Heart right ventricle (tissue), 16 donors: ENCODE measurements at regions of chr15 and their contacts with region 1.

Region 1: GRCh38 chr15:41180206-41180789 is 50.3 kb downstream of the EXD1 start:
- DNase-seq: no peak
- ATAC-seq: no peak
- H3K4me3 ChIP-seq: no peak overlapping the region
- H3K27ac ChIP-seq: no peak overlapping the region
- H3K4me1 ChIP-seq: no peaks in the 10 kb centered on the region
- H3K27me3 ChIP-seq: no peaks in the 10 kb centered on the region
- CTCF ChIP-seq: no peak

Region 2: DNA sequence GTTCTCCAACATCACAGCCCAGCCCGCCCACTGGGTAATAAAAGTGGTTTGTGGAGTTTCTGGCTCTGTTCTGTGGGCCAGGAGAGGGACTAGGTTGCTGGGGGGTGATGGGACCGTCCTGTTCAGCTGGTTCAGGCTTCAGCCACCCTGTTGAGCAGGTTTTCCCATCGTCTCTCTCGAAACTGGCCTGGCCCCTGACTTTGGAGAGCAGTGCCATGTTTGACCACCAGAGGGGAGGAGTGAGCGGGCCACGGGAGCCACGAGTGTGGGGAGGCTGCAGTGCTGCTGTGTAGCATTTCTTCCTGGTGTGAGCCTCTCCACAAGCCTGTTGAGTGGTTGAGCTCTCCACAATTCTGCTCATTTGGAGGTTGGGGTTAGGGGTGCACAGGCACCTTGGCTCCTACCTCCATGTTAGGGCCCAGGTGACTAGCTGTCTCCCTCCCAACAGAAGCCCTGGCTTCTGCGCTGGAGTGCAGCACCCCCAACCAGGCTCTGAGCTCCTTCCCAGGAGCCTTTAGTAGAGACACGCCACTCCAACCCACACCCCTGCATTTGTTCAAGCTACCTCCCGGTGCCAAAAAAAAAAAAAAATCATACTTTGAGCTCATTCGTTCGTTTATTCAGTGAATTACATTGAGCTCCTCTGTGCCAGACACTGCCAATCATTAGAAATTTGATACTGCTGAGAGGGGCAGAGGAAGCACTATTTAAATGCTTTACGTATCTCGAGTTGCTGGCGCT is 322.5 kb before region 1 on chr15:
- intact Hi-C with region 1: loop called in 6 of 10 experiments (anchors 5 to 10 kb)
- DNase-seq: peak; percentile 57 to 73
- ATAC-seq: peak; percentile 75 to 89 (median 84)
- H3K4me3 ChIP-seq: no peak overlapping the region
- H3K27ac ChIP-seq: no peak overlapping the region
- H3K4me1 ChIP-seq: peaks cover 0 to 20% (median 0%) of the 10 kb centered on the region in 9 donors
- H3K27me3 ChIP-seq: peaks cover 0 to 19% (median 0%) of the 10 kb centered on the region in 7 donors
- CTCF ChIP-seq: peak; percentile 86 to 95 (median 93)

Region 3: GRCh38 chr15:41022487-41023090 is 157.7 kb before region 1 on chr15:
- intact Hi-C with region 1: loop called in 1 of 10 experiments (anchors 10 kb)
- DNase-seq: peak in 1 of 2 donors; percentile 38
- ATAC-seq: peak; percentile 45 to 71 (median 54)
- H3K4me3 ChIP-seq: no peak overlapping the region
- H3K27ac ChIP-seq: no peak overlapping the region
- H3K4me1 ChIP-seq: peaks cover 2 to 61% (median 34%) of the 10 kb centered on the region in 9 donors
- H3K27me3 ChIP-seq: no peaks in the 10 kb centered on the region
- CTCF ChIP-seq: peak; percentile 45 to 85 (median 77)

Region 4: GRCh38 chr15:41169781-41170180 is 10.5 kb before region 1 on chr15:
- intact Hi-C with region 1: no loop called
- DNase-seq: no peak
- ATAC-seq: peak in 2 of 8 donors; percentile 29 to 31
- H3K4me3 ChIP-seq: no peak overlapping the region
- H3K27ac ChIP-seq: peak overlapping the region in 1 of 10 donors; percentile 18
- H3K4me1 ChIP-seq: peaks cover 0 to 5% (median 0%) of the 10 kb centered on the region in 9 donors
- H3K27me3 ChIP-seq: no peaks in the 10 kb centered on the region
- CTCF ChIP-seq: no peak